ENCODE measurements at regions of chr18 and their contacts with region 1.

Region 1: GRCh38 chr18:58135701-58136331 is 91.8 kb downstream of the NEDD4L start:
- DNase-seq: peak; percentile 81 to 90 (median 87)
- H3K4me3 ChIP-seq: peak overlapping the region in 2 of 7 experiments; percentile 29 to 49
- H3K27ac ChIP-seq: no peak overlapping the region
- H3K4me1 ChIP-seq: peaks cover 0 to 13% (median 6%) of the 10 kb centered on the region in 4 experiments
- H3K27me3 ChIP-seq: no peaks in the 10 kb centered on the region

Region 2: DNA sequence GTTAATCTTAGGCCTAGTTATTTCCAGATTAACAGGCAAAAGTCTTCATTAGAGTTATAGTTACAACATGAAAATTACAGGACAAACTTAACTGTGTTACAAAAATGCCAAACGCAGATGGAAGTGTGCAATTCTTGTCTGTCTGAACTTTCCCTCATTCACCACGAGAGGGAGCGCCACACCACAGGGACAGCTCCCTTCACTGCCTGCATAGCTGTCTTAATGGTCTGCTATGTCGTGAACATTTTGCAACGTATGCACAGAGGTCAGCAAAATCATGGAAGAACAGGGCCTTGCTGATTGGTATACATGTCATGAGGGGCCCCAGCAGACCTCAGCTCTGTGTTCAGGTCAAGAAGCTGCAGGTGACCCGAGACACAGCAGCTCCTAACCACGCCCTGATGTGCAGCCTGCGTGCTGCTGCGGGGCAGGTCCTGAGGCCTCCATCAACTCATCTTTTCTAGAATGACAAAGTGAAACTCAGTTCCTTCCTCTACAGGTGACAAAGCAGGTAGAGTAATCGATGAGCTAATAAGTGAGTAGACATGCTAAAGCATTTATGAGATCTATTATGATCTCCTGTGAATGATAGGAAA is 253.9 kb before region 1 on chr18:
- CTCF ChIA-PET with region 1: interaction called, 11 read pairs
- POLR2A ChIA-PET with region 1: no interaction called
- DNase-seq: peak; percentile 64 to 83 (median 77)
- H3K4me3 ChIP-seq: no peak overlapping the region
- H3K27ac ChIP-seq: no peak overlapping the region
- H3K4me1 ChIP-seq: peaks cover 0 to 2% (median 1%) of the 10 kb centered on the region in 4 experiments
- H3K27me3 ChIP-seq: no peaks in the 10 kb centered on the region

Region 3: GRCh38 chr18:58043491-58044379 is 92.1 kb before region 1 on chr18 and contains the start of gene NEDD4L:
- CTCF ChIA-PET with region 1: interaction called, 13 read pairs
- POLR2A ChIA-PET with region 1: no interaction called
- DNase-seq: peak; percentile 88 to 94 (median 93)
- H3K4me3 ChIP-seq: peak within 1 kb of the TSS; percentile 70 to 96 (median 85)
- H3K27ac ChIP-seq: peak within 1 kb of the TSS in 1 of 2 experiments; percentile 74
- H3K4me1 ChIP-seq: peaks cover 2 to 25% (median 21%) of the 10 kb centered on the region in 4 experiments
- H3K27me3 ChIP-seq: no peaks in the 10 kb centered on the region

Region 4: DNA sequence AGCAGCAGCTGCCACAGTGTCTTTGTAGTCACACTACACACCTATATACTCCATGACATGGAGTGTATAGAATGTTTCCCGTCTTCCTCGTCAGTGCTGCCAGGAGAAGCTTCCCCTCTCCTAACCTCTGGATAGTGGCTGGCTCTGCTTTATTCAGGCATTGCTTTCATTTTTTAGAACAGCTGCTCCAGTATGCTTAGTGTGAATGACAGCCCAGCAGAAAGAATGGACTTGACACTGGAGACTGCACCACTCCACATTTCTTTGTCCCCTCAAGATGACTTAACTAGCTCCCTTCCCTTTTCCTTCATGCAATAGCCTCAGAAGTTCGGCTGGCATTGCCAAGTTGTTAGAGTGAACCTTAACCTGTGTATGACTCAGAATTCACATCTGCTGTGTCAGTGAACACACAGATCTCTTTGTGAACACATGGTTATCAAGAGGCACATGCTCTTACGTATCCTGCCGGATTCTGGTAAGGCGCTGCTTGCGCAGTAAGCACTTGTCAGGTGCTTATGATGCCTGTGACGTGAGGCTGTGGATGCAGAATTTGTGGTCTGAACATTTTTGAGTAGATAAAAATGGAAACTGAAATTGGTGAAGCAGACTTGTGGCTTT is 17.9 kb before region 1 on chr18:
- CTCF ChIA-PET with region 1: interaction called, 15 read pairs
- POLR2A ChIA-PET with region 1: no interaction called
- DNase-seq: peak; percentile 92 to 96 (median 93)
- H3K4me3 ChIP-seq: no peak overlapping the region
- H3K27ac ChIP-seq: no peak overlapping the region
- H3K4me1 ChIP-seq: peaks cover 0 to 15% (median 8%) of the 10 kb centered on the region in 4 experiments
- H3K27me3 ChIP-seq: no peaks in the 10 kb centered on the region

Region 5: DNA sequence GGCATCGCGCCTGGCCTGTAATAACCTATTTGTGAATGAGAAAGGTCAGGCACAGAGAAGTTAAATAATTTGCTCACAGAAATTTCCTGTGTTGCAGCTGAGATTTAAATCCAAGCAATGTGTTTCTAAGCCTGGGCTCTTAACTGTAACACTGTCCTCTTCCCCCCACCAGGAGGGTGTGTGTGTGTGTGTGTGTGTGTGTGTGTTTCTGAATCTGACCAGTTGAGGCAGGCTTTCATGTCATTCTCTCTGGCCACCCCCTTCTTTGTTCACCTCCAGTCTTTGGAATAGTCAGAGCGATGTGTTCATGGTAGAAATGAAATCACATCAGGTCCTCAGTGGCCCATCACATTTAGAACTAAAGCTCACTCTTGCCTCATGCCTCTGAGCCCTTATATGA is 10.6 kb before region 1 on chr18:
- CTCF ChIA-PET with region 1: interaction called, 15 read pairs
- POLR2A ChIA-PET with region 1: no interaction called
- DNase-seq: no peak
- H3K4me3 ChIP-seq: no peak overlapping the region
- H3K27ac ChIP-seq: no peak overlapping the region
- H3K4me1 ChIP-seq: no peaks in the 10 kb centered on the region
- H3K27me3 ChIP-seq: no peaks in the 10 kb centered on the region

Region 6: DNA sequence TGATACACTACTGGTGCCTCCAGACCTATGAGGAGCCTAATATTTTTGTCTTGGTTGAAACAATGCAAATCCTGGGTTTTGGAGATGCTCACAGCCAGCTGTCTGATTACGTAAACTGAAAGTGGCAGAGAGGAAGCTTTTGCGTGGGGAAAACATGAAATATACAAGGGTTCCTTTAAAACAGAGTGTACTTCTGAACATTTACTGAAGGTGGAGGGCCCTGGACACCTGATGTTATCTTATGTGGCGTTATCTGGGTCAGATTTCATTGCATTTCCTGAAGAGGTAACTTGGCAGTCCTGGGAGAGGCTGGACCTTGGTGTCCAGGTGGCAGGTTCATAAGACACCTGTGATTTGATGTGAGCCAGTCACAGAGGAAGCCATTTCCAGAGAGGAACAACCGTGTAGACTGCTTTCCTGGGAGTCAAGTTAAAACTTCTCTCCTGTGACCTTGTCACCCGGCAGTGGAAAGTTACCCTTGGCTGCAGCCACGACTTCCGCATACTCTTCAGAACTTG is 13.2 kb after region 1 on chr18:
- CTCF ChIA-PET with region 1: interaction called, 22 read pairs
- POLR2A ChIA-PET with region 1: no interaction called
- DNase-seq: no peak
- H3K4me3 ChIP-seq: no peak overlapping the region
- H3K27ac ChIP-seq: no peak overlapping the region
- H3K4me1 ChIP-seq: no peaks in the 10 kb centered on the region
- H3K27me3 ChIP-seq: no peaks in the 10 kb centered on the region

Region 7: DNA sequence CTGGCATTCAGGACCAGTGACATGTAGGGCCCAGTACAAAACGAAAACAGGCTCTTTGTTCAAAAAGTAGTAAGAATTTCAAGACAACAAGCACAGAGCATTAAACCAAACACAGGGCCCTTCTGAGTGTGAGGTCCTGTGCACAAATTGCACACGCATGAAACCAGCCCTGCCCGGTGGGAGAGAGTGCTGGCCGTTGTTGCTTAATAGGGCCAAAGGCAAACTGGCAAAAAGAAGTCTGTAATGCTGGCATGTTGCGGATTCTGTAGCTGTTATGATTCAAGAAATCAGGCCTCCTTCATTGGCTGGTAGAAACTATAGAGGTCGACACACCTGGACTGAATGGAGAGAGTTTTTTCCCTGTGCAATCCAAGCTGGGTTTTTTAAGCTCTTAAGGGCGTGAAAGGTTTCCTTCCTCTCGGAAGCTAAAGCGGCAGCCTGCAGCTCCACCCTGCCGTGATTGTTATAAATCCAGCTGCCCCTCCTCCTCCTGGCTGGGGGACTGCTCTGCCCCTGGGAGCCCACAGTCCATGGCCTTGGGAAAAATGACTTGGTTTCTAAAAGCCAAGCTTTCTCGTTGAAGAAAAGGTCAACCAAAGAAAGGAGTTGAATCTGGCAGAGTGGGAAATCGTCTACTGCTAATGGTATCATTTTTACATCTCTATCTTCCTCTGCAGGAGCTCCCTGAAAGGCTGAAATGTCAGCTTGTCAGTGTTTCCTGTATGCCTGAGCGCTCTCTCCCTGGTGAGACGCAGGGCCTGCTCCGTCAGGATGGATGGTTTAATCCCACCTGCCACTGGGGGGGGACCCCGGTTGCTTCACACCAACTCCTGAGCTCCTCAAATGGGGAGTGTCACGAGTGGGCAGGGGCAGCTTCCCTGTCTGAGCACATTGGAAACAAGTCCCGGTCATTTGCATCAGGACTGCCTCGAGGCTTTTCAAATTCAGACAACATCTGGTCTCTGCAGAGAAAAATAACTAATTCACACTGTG is 349.5 kb after region 1 on chr18:
- CTCF ChIA-PET with region 1: no interaction called
- POLR2A ChIA-PET with region 1: no interaction called
- DNase-seq: peak in 1 of 3 donors; percentile 6
- H3K4me3 ChIP-seq: no peak overlapping the region
- H3K27ac ChIP-seq: no peak overlapping the region
- H3K4me1 ChIP-seq: peaks cover 0 to 5% (median 2%) of the 10 kb centered on the region in 4 experiments
- H3K27me3 ChIP-seq: peaks cover 0 to 24% (median 14%) of the 10 kb centered on the region in 5 experiments